T-cell (primary cell): ENCODE measurements at regions of chr15 and their contacts with region 1.

Region 1: DNA sequence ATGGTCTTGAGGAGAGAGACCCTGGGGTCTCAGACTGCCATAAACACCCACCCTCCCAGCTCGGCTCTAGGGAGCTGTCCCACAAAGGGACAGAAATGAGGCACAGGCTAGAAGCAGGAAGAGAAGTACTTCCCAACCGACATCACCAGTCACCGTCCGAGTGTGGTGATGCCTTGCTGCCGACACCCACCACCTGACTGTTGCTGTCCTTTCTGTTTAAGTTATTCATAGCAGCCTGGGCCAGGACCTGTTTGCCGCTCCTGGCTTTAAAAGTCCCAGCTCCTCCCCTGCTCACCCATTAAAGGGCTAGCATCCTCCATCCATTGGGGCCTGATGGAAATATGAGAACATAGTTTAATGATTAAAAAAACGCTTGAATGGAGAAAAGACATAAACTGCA is 13.2 kb upstream of the SPG11 start:
- DNase-seq: peak in 2 of 35 experiments; percentile 11 to 53
- ATAC-seq: peak in 3 of 4 experiments; percentile 11 to 18 (median 16)
- H3K4me3 ChIP-seq: peak overlapping the region; percentile 24 to 26
- H3K4me3 Mint-ChIP-seq: peak overlapping the region; percentile 58 to 69 (median 58)
- H3K27ac ChIP-seq: peak overlapping the region; percentile 82
- H3K27ac Mint-ChIP-seq: peak overlapping the region; percentile 96 to 98
- H3K4me1 ChIP-seq: peaks cover 60 to 98% of the 10 kb centered on the region in 2 experiments
- H3K4me1 Mint-ChIP-seq: peaks cover 88 to 92% (median 91%) of the 10 kb centered on the region in 3 donors
- H3K27me3 ChIP-seq: no peaks in the 10 kb centered on the region
- H3K27me3 Mint-ChIP-seq: no peaks in the 10 kb centered on the region

Region 2: DNA sequence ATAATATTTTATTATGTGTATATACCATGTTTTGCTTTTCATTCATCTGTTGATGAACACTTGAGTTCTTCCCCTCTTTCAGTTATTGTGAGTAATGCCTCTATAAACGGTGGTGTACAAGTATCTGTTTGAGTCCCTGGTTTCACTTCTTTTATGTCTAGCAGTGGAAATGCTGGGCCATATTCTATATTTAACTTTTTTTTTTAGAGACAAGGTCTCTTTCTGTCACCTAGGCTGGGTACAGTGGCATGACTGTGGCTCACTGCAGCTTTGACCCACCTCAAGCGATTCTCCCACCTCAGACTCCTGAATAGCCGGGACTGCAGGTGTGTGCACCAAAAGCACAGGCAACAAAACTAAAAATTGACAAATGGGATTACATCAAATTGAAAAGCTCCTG is 368.3 kb before region 1 on chr15:
- CTCF ChIA-PET with region 1: interaction called in 1 of 2 experiments, 11 read pairs
- POLR2A ChIA-PET with region 1: no interaction called
- DNase-seq: no peak
- ATAC-seq: no peak
- H3K4me3 ChIP-seq: no peak overlapping the region
- H3K4me3 Mint-ChIP-seq: no peak overlapping the region
- H3K27ac ChIP-seq: no peak overlapping the region
- H3K27ac Mint-ChIP-seq: no peak overlapping the region
- H3K4me1 ChIP-seq: no peaks in the 10 kb centered on the region
- H3K4me1 Mint-ChIP-seq: peaks cover 38 to 51% (median 50%) of the 10 kb centered on the region in 3 donors
- H3K27me3 ChIP-seq: no peaks in the 10 kb centered on the region
- H3K27me3 Mint-ChIP-seq: no peaks in the 10 kb centered on the region

Region 3: GRCh38 chr15:44738340-44738984 is 61.8 kb after region 1 on chr15:
- CTCF ChIA-PET with region 1: interaction called in 1 of 2 experiments, 17 read pairs
- POLR2A ChIA-PET with region 1: interaction called in 1 of 2 experiments, 3 read pairs
- DNase-seq: peak in 1 of 35 experiments; percentile 74
- ATAC-seq: no peak
- H3K4me3 ChIP-seq: no peak overlapping the region
- H3K4me3 Mint-ChIP-seq: peak overlapping the region in 2 of 3 donors; percentile 14 to 51
- H3K27ac ChIP-seq: peak overlapping the region; percentile 89
- H3K27ac Mint-ChIP-seq: peak overlapping the region; percentile 80 to 84
- H3K4me1 ChIP-seq: peaks cover 7 to 43% of the 10 kb centered on the region in 2 experiments
- H3K4me1 Mint-ChIP-seq: peaks cover 55 to 59% (median 58%) of the 10 kb centered on the region in 3 donors
- H3K27me3 ChIP-seq: no peaks in the 10 kb centered on the region
- H3K27me3 Mint-ChIP-seq: no peaks in the 10 kb centered on the region

Region 4: GRCh38 chr15:44753345-44753744 is 76.7 kb after region 1 on chr15:
- CTCF ChIA-PET with region 1: no interaction called
- POLR2A ChIA-PET with region 1: interaction called in 1 of 2 experiments, 11 read pairs
- DNase-seq: no peak
- ATAC-seq: no peak
- H3K4me3 ChIP-seq: no peak overlapping the region
- H3K4me3 Mint-ChIP-seq: no peak overlapping the region
- H3K27ac ChIP-seq: no peak overlapping the region
- H3K27ac Mint-ChIP-seq: no peak overlapping the region
- H3K4me1 ChIP-seq: no peaks in the 10 kb centered on the region
- H3K4me1 Mint-ChIP-seq: peaks cover 0 to 9% (median 2%) of the 10 kb centered on the region in 3 donors
- H3K27me3 ChIP-seq: no peaks in the 10 kb centered on the region
- H3K27me3 Mint-ChIP-seq: no peaks in the 10 kb centered on the region